Posterior cingulate gyrus (tissue), 11 donors: ENCODE measurements at regions of chr15 and their contacts with region 1.

Region 1: DNA sequence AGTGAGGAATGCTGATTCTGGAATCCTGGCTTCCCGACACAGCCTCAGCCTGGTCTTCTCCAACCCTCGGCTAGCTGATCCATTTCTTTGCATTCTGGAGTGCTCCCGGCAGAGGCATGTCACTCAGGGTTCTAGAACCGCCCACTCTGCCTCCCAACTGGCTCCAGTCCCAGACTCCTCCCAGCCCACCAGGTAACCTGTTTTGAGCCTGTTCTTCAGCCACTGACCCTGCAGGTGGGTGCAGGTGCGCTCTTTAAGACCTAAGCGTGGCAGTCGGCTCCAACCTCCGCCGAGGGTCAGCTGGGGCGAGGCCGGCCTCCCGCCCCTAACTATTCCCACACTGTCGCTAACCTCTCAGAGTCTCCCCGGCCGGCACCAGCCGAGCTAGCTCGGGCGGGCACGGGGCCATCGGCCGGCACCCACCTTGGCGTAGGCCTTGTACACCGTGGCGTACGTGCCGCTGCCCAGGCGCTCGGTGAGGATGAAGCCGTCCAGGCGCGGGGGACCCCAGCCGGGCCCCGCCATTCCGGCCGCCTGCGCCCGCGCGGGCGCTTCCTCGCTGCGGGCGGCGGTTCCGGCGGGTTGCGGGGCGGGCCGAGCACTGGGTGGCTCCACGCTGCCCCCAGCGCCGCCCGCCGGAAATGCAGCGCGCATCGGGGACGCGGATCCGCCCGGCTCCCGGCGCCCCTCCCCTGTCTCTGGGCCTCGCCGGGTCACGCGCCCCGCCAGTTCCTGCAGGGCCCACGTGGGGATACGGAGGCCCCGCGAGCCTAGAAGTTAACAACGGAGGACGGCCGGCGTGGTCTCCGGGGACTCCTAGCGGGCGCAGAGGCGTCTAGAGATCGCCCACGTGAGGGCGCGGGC is at the start of gene ULK3:
- DNase-seq: peak; percentile 86 to 99 (median 92)

Region 2: DNA sequence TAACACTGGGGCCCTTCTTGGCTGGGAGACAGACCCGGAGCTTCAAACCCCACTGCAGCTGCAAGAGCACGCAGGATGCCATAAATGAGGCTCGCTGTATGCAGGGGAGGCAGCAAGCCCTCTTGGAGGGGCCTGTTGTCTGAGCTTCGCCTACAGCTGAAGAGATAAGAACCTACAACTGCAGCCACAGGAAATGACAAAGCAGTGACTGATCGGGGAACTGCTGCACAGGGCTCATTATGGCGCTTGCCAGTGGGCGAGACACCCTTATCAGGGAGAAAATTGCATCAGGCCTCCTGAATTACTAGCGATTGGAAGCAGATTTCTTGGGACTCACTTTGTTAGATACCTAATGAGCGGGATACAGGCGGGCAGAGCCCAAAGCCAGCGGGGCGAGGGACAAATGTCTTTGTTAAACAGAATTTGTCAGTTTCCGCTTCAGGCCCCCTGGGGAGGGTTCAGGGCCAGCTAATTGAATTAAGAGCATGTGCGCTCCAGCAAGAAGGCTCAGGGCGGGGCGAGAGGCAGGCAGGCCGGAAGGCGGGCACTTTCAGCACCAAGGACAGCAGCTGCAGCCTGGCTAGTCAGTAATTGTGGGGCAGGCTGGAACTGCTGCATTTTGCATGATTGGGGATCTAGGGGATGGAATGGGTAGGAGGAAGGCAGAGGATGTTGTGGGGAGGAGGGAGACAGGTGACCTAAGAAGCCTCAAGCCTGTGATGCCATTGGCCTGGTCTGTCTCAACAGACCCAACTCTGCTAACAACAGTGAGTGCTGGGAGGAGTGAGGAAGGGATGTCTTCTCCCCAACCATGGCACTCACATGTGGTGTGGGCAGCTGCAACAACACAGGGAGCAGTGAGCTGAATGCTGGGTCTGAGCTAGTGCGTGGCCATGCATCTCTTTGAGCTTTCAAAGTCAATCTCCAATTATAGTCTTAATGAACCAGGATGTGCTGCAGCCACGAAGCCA is 551.4 kb before region 1 on chr15:
- intact Hi-C with region 1: no loop called
- DNase-seq: peak; percentile 31 to 93 (median 62)

Region 3: DNA sequence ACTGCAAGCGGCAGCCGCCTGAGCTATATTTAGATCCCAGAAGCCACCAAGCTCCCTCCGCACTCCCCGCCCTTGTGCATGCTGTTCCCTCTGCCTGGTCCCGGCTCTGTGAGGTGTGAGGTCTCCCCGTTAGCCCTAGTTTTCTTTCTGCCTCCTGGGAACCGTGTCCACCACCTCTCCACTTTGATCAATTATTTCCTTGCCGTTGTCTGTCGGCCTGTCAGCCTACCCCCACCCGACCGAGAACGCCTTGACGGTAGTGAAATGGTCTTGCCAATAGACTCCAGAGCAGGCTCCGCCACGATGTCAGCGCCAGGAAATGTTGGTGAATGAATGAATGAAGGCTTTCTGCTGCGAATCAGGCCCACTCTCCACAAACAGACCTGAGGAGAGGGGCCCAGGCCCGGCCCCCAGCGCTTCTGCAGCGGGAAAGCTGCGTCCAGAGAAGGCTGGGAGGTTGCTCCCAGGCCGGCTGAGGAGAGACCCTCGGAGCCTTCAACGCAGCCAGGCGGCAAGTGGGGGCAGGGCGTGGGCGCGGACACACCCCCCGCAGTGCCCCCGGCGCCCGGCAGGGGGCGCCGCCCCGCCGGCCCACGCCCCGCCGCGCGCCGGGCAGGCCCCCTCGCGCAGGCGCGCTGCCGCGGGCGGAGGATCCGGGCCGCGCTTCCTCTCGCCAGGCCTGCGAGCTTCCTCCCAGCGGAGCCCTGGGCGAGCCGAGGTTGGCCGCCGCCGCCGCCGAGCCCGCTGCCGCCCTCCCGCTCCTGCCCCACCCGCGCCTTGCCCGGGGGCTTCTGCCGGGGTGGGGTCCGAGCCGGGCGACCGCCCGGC is 61.2 kb before region 1 on chr15 and contains the start of gene CSK:
- intact Hi-C with region 1: loop called (anchors 5 kb)
- DNase-seq: peak in 8 of 10 donors; percentile 43 to 96 (median 62)

Region 4: DNA sequence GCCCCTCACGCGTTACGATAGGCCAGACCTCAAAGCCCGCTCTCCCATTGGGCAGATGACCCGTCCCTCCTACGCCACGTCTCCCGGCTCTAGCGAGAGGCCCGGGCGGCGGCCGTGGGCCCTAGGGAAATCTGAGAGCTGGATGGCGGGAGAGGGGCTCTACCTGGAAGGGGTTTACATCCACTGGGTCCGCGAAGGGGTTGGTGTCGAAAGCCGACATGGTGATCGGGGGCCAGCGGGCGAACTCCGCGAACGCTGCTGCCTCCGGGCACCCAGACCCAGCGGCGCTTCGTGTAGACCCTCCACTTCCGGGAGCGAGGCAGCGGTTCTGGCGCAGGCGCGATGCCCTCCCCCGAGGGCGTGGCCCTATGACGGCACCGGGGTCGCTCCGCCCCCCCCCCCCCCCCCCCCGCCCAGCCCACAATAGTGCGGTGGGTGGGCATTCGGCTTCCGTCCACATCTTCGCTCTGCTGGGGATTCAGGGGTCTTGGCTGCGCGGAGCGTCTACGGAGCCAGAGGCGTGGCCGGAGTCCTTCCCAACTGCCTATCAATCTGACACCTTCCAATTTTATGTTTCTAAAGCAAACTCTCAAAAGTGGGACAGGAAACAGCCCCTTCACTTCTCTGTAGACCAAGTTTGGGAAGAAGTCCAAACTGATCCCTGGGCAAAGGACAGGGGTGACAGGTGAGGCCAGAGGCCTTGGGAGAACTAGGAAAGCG is 30.4 kb after region 1 on chr15 and contains the start of gene SCAMP2:
- intact Hi-C with region 1: loop called (anchors 2 kb)
- DNase-seq: peak; percentile 92 to 99 (median 95)